Heart left ventricle (tissue), 16 donors: ENCODE measurements at regions of chr17 and their contacts with region 1.

Region 1: GRCh38 chr17:82871056-82871903 is 31.5 kb upstream of the ZNF750 start:
- DNase-seq: peak in 4 of 5 donors; percentile 45 to 63 (median 49)
- ATAC-seq: peak; percentile 22 to 79 (median 33)
- H3K4me3 ChIP-seq: peak overlapping the region in 1 of 12 donors; percentile 4
- H3K27ac ChIP-seq: peak overlapping the region; percentile 43 to 86 (median 70)
- H3K4me1 ChIP-seq: peaks cover 0 to 54% (median 31%) of the 10 kb centered on the region in 12 donors
- H3K27me3 ChIP-seq: no peaks in the 10 kb centered on the region
- CTCF ChIP-seq: no peak
- POLR2A ChIP-seq: no peak

Region 2: DNA sequence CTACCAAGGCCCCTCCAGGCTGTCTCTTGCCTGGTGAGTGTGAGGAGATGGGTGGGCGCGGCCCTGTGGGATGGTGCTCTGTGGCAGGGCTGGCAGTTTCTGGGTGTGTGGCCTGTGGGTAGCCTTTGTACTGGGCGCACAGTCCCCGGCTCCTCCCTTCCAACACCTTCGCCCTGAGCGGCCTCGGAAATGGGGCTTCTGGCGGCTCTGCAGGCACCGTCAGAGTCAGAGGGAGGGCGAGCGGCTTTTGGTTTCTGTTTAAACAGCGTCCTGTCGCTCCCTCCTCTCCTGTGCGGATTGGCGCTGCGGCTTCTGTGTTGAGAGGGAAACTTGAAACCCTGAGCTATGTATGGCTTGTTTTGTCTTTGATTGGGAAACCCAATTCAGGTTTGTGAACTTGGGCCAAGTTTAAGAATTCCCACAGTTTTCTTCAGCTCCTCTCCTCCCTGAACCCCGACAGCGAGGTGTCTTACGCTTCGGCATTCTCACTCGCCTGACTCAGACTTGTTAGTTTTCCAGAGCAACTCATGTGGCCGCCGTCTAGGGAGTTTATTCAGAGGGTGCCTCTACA is 23.2 kb before region 1 on chr17:
- intact Hi-C with region 1: loop called in 1 of 10 experiments (anchors 1 kb)
- DNase-seq: peak in 1 of 5 donors; percentile 61
- ATAC-seq: peak in 3 of 4 donors; percentile 14 to 17 (median 15)
- H3K4me3 ChIP-seq: peak overlapping the region in 9 of 12 donors; percentile 2 to 50 (median 31)
- H3K27ac ChIP-seq: peak overlapping the region in 11 of 12 donors; percentile 6 to 94 (median 79)
- H3K4me1 ChIP-seq: peaks cover 0 to 20% (median 9%) of the 10 kb centered on the region in 12 donors
- H3K27me3 ChIP-seq: no peaks in the 10 kb centered on the region
- CTCF ChIP-seq: no peak
- POLR2A ChIP-seq: no peak